Posterior vena cava (tissue), 2 donors: ENCODE measurements at regions of chr17 and their contacts with region 1.

Region 1: DNA sequence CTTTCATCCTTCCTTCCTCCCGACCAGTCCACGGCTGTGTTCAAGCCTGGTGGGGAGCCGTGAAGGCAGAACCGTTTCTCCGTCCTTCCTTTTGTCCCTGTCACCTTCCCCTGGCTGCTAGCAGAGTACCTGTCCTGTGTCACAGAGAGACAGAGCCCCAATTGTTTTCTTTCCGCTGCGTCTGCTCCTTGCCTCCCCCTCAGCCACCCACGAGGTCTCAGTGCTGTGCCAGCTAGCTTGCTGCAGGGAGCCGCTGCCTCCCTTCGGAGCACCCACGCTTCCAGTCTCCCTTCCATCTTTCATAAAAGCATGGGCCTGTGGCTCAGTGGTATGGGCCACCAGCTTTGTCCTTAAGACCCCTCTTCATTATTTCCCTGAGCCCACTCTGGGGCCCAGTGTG is 62.2 kb downstream of the MPRIP start:
- DNase-seq: no peak

Region 2: GRCh38 chr17:17090642-17091103 is 13.8 kb before region 1 on chr17:
- intact Hi-C with region 1: loop called in 1 of 2 experiments (anchors 1 kb)
- DNase-seq: peak; percentile 38

Region 3: GRCh38 chr17:17167986-17168385 is 63.5 kb after region 1 on chr17:
- intact Hi-C with region 1: no loop called
- DNase-seq: no peak